ENCODE measurements at regions of chr18 and their contacts with region 1.

Region 1: DNA sequence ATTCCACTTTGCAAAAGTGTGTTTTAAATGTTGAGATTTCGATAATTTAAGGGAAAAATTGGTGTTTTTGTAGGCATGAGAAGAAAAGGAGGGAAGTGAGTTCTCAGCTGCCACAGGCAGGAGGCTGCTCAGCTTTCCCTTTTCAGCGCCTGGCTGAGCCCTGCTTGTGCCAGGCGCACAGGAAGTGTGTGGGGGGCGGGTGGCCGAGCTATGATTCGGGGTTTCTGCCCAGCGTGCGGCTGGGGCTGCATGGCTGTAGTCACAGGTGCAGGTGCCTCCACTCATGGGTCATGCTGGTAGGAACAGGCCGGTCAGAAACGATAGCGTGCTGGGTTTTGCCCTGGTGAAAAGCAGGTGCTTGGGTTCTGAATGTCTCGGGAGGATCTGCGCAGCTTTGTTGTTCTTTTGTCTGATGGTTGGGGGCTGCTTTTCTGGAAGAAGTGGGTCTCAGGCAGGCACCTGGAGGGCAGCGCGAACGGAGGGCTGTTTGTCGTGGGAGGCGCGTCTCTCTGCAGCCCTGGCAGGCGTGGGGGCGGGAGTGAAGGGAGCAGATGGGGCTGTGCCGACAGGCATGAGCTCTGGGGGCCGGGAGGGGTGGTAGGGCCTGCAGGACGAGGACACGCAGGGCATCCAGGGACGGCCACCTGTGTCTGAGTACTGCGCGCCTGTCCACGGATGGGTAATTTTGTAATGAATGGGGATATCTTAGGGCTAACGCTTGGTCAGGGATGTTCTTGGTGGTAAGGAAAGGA is 2.1 kb downstream of the KCNG2 start:
- DNase-seq: no peak
- ATAC-seq: no peak
- H3K4me3 ChIP-seq: no peak overlapping the region
- H3K27ac ChIP-seq: no peak overlapping the region
- H3K4me1 ChIP-seq: peaks cover 18% of the 10 kb centered on the region
- H3K27me3 ChIP-seq: peaks cover 0 to 19% of the 10 kb centered on the region in 2 donors
- CTCF ChIP-seq: no peak
- POLR2A ChIP-seq: no peak

Region 2: GRCh38 chr18:79234438-79234837 is 565.4 kb before region 1 on chr18:
- intact Hi-C with region 1: no loop called
- DNase-seq: no peak
- ATAC-seq: no peak
- H3K4me3 ChIP-seq: no peak overlapping the region
- H3K27ac ChIP-seq: no peak overlapping the region
- H3K4me1 ChIP-seq: no peaks in the 10 kb centered on the region
- H3K27me3 ChIP-seq: no peaks in the 10 kb centered on the region
- CTCF ChIP-seq: no peak
- POLR2A ChIP-seq: no peak

Region 3: GRCh38 chr18:79749251-79750191 is 50.3 kb before region 1 on chr18:
- intact Hi-C with region 1: loop called (anchors 10 kb)
- DNase-seq: peak in 2 of 4 donors; percentile 8 to 16
- ATAC-seq: no peak
- H3K4me3 ChIP-seq: no peak overlapping the region
- H3K27ac ChIP-seq: no peak overlapping the region
- H3K4me1 ChIP-seq: no peaks in the 10 kb centered on the region
- H3K27me3 ChIP-seq: no peaks in the 10 kb centered on the region
- CTCF ChIP-seq: no peak
- POLR2A ChIP-seq: no peak

Region 4: GRCh38 chr18:79848579-79849327 is 49.0 kb after region 1 on chr18:
- intact Hi-C with region 1: no loop called
- DNase-seq: peak in 1 of 4 donors; percentile 18
- ATAC-seq: no peak
- H3K4me3 ChIP-seq: no peak overlapping the region
- H3K27ac ChIP-seq: no peak overlapping the region
- H3K4me1 ChIP-seq: no peaks in the 10 kb centered on the region
- H3K27me3 ChIP-seq: no peaks in the 10 kb centered on the region
- CTCF ChIP-seq: no peak
- POLR2A ChIP-seq: no peak

Measured in body of pancreas (tissue), 4 donors.